Ascending aorta (tissue), 2 donors: ENCODE measurements at regions of chr16 and their contacts with region 1.

Region 1: GRCh38 chr16:1182316-1182671 is 29.4 kb downstream of the CACNA1H start:
- DNase-seq: peak; percentile 70 to 92
- H3K4me3 ChIP-seq: peak overlapping the region; percentile 6 to 35
- H3K27ac ChIP-seq: peak overlapping the region; percentile 83 to 91
- H3K4me1 ChIP-seq: peaks cover 19 to 32% of the 10 kb centered on the region in 2 donors
- H3K27me3 ChIP-seq: no peaks in the 10 kb centered on the region
- CTCF ChIP-seq: no peak

Region 2: DNA sequence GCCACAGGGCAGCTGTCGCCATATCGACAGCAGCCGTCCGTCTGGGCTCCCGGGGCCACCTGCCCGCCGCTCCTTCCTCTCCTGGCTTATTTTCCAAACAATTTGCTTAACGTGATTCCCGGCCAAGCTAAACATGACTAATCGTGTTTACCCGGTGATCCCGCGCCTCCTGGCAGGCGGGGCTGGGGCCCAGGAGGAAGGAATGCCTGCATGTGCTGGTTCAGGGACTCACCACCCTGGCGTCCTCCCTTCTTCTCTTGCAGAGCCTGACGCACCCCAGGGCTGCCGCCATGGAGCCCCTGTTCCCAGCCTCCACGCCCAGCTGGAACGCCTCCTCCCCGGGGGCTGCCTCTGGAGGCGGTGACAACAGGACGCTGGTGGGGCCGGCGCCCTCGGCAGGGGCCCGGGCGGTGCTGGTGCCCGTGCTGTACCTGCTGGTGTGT is 103.7 kb before region 1 on chr16:
- intact Hi-C with region 1: no loop called
- DNase-seq: peak; percentile 68 to 93
- H3K4me3 ChIP-seq: peak overlapping the region; percentile 10 to 52
- H3K27ac ChIP-seq: peak overlapping the region; percentile 19 to 53
- H3K4me1 ChIP-seq: peaks cover 43 to 59% of the 10 kb centered on the region in 2 donors
- H3K27me3 ChIP-seq: no peaks in the 10 kb centered on the region
- CTCF ChIP-seq: no peak

Region 3: DNA sequence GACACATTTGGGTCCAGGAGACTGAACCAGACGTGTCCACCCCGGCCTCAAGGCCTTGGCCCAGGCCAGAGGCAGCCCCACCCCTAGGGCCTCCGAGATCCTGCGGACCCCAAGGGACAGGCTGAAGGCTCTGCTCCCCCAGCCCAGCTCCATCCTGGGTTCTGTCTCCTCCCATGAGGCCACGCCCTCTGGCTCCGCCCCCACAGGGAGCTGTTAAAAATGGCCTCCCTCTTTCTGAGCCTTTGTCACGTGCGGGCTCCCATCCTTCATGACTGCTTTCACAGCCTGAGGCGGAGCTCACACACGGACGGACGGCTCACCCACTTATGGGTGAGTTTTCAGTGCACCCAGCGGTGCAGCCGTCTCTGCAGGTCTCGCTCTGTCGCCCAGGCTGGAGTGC is 35.9 kb before region 1 on chr16:
- intact Hi-C with region 1: no loop called
- DNase-seq: no peak
- H3K4me3 ChIP-seq: no peak overlapping the region
- H3K27ac ChIP-seq: no peak overlapping the region
- H3K4me1 ChIP-seq: no peaks in the 10 kb centered on the region
- H3K27me3 ChIP-seq: no peaks in the 10 kb centered on the region
- CTCF ChIP-seq: no peak

Region 4: GRCh38 chr16:1159973-1160772 is 22.1 kb before region 1 on chr16:
- intact Hi-C with region 1: loop called (anchors 2 kb)
- DNase-seq: no peak
- H3K4me3 ChIP-seq: peak overlapping the region; percentile 33 to 34
- H3K27ac ChIP-seq: peak overlapping the region in 1 of 2 donors; percentile 40
- H3K4me1 ChIP-seq: peaks cover 9 to 22% of the 10 kb centered on the region in 2 donors
- H3K27me3 ChIP-seq: no peaks in the 10 kb centered on the region
- CTCF ChIP-seq: no peak

Region 5: GRCh38 chr16:1225051-1225451 is 42.8 kb after region 1 on chr16 and contains the start of gene TPSG1:
- intact Hi-C with region 1: no loop called
- DNase-seq: no peak
- H3K4me3 ChIP-seq: no peak within 1 kb of the TSS
- H3K27ac ChIP-seq: no peak within 1 kb of the TSS
- H3K4me1 ChIP-seq: no peaks in the 10 kb centered on the region
- H3K27me3 ChIP-seq: no peaks in the 10 kb centered on the region
- CTCF ChIP-seq: no peak
- total RNA-seq, gene TPSG1: not detected